AG04449 (cell line): ENCODE measurements at regions of chr2 and their contacts with region 1.

Region 1: DNA sequence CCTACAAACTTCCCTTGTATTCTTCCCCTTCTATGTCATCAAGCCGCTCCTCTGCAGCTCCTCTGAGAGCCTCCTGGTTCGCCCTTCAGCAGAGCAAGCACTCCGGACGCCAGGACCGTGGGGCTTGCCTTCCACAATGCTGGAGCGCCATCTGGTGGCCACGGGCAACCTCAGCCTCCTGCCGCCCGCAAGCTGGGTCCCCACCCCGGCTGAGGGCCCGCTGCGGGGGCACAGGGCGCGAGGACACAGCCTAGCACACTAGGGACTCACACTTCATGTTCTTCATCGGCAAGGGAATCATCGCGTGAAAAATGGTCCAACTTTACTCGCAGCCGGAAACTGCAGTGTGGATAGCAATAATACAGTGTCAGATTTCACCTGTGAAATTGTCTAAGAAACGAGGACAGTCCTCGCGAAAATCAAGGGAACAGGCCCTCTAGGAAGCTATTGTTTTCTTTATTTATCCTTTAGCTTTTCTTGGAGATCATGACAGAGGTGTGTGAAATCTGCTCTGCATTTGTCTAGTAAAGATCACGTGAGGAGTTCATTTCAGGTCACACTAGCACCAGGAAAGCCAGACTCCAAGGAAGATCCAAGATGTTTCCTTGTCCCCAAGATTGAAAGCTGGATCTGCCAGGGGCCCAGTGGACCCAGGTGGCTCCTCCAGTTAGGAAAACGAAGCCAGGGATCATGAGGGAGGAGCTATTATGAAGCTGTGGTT is 5.8 kb downstream of the PRLH start:
- DNase-seq: peak; percentile 59
- H3K4me3 ChIP-seq: 0 out of 2 replicates have a peak overlapping the region, but pooled peaks have one; percentile 6
- CTCF ChIP-seq: peak; percentile 100

Region 2: GRCh38 chr2:237092920-237093781 is 479.0 kb before region 1 on chr2:
- CTCF ChIA-PET with region 1: interaction called, 85 read pairs
- POLR2A ChIA-PET with region 1: no interaction called
- DNase-seq: no peak
- H3K4me3 ChIP-seq: no peak overlapping the region
- CTCF ChIP-seq: peak; percentile 60

Region 3: GRCh38 chr2:237165405-237166276 is 406.5 kb before region 1 on chr2:
- CTCF ChIA-PET with region 1: interaction called, 29 read pairs
- POLR2A ChIA-PET with region 1: no interaction called
- DNase-seq: no peak
- H3K4me3 ChIP-seq: no peak overlapping the region
- CTCF ChIP-seq: peak; percentile 53

Region 4: DNA sequence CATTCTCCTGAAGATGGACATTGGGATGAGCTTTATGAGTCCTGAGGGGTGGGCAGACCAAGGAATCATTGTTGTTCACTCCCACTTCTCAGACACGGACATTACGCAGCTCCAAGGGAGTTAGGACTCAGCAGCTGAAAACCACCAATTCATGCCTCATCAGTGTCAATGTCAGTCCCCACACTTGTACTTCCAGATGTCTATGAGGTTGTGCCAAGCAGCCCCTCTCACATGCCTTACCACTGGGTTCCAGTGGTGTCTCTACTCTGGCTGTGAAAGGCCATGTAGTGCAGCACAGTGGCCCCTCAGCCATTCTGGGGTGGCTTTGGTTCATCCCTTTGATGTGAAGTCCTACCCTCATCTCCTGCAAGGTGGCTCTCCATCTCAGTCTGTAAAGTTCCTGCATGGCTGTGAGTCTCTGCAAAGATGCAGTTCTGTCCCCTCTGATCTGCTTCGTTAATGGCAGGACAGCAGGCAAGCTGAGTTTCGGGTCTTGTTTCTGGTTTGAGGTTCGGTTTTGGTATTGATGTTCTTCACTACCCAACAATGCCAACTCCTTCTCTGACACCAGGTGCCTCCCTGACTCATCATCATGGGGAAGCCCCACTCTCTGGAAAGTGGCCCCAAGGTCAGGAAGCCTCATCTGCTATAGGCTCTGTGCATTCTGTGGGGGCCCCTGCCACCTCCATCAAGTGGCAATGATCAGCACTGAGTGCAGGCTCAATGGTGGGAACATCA is 144.2 kb before region 1 on chr2:
- CTCF ChIA-PET with region 1: interaction called, 10 read pairs
- POLR2A ChIA-PET with region 1: no interaction called
- DNase-seq: no peak
- H3K4me3 ChIP-seq: no peak overlapping the region
- CTCF ChIP-seq: no peak

Region 5: GRCh38 chr2:237500681-237501424 is 71.3 kb before region 1 on chr2:
- CTCF ChIA-PET with region 1: interaction called, 25 read pairs
- POLR2A ChIA-PET with region 1: no interaction called
- DNase-seq: peak; percentile 100
- H3K4me3 ChIP-seq: no peak overlapping the region; the same call in 1 of the 2 replicates
- CTCF ChIP-seq: no peak

Region 6: DNA sequence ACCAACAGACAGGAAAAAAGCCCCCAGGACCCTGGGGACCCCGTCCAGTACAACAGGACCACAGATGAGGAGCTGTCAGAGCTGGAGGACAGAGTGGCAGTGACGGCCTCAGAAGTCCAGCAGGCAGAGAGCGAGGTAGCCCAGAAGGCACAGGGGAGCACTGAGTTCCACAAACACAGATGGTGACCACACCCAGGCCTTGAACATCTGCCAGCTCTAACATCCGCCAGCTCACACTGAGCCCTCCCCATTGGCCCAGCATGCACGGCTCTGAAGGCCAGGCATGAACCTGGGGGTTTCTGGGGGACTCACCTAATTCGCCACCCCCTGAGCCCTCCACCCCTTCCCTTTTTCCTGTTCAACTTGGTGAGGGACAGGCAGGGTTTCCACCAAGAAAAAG is 31.4 kb before region 1 on chr2:
- CTCF ChIA-PET with region 1: interaction called, 16 read pairs
- POLR2A ChIA-PET with region 1: no interaction called
- DNase-seq: no peak
- H3K4me3 ChIP-seq: no peak overlapping the region
- CTCF ChIP-seq: no peak

Region 7: GRCh38 chr2:237647176-237648007 is 75.2 kb after region 1 on chr2:
- CTCF ChIA-PET with region 1: no interaction called
- POLR2A ChIA-PET with region 1: no interaction called
- DNase-seq: no peak
- H3K4me3 ChIP-seq: no peak overlapping the region
- CTCF ChIP-seq: no peak

Region 8: DNA sequence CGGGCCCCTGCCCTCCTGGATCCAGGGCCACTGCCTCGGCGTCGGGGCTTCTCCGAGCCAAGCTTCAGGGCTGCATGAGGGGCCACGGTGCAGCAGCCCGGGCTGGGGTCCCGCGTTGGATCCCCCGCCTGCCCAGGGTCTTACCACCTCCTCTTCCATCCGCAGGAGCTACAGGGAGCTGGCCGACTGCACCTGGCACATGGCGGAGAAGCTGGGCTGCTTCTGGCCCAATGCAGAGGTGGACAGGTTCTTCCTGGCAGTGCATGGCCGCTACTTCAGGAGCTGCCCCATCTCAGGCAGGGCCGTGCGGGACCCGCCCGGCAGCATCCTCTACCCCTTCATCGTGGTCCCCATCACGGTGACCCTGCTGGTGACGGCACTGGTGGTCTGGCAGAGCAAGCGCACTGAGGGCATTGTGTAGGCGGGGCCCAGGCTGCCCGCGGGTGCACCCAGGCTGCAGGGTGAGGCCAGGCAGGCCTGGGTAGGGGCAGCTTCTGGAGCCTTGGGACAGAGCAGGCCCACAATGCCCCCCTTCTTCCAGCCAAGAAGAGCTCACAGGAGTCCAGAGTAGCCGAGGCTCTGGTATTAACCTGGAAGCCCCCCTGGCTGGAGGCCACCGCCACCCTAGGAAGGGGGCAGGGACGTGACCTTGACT is 339.3 kb after region 1 on chr2:
- CTCF ChIA-PET with region 1: no interaction called
- POLR2A ChIA-PET with region 1: no interaction called
- DNase-seq: no peak
- H3K4me3 ChIP-seq: no peak overlapping the region
- CTCF ChIP-seq: no peak